ENCODE measurements at regions of chr2 and their contacts with region 1.

Region 1: DNA sequence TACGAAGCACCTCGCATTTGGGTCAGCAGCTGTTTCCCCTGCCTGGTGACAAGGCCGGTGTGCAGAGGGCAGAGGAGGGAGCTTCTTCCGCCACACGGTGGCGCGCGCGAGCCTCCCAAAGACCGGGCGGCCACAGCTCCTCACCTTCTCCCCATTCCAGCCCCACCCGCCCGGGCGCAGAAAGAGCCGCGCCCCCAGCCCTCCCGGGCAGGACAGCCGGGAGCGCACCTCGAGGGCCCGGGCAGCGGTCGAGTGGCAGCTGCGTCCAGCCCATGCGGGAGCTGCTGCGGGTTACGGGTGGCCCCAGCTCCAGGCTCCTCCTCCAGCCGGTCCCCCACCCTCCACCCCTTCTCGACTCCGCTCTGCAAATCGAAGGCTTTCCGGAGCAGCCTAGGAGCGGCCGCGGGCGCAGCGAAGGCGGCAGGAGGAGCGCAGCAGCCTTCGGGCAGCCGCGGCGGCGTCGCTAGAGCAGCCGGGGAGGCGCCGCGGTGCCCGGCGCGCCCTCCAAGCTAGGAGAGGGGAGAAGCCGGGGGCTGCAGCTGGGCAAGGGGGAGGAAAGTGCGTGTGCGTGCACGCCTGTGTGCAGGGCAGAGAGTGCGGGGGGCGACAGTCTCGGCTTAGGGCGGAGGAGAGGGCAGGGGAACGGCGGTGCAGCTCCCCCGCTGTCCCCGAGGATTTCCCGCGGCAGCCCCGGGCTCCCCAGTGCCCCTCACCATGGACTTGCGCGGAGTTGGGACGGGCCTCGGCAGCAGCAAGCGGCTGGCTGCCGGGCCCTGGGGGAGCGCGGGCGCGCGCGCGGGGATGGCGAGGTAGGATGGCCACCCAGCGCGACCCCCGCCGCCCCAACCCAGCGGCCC is at the start of gene CCDC85A:
- DNase-seq: peak; percentile 79 to 90 (median 84)
- H3K4me3 ChIP-seq: peak within 1 kb of the TSS; percentile 56 to 89 (median 75)
- H3K27ac ChIP-seq: peak within 1 kb of the TSS in 52 of 59 donors; percentile 19 to 87 (median 72)
- H3K27me3 ChIP-seq: peaks cover 0 to 4% (median 0%) of the 10 kb centered on the region in 45 donors
- CTCF ChIP-seq: peak; percentile 49 to 98 (median 94)
- total RNA-seq, gene CCDC85A: 14.7 to 52.9 (median 33.1) TPM

Region 2: GRCh38 chr2:55929476-55929875 is 254.4 kb before region 1 on chr2:
- intact Hi-C with region 1: no loop called
- DNase-seq: no peak
- H3K4me3 ChIP-seq: no peak overlapping the region
- H3K27ac ChIP-seq: no peak overlapping the region
- H3K27me3 ChIP-seq: peaks cover 0 to 17% (median 0%) of the 10 kb centered on the region in 45 donors
- CTCF ChIP-seq: no peak

Region 3: DNA sequence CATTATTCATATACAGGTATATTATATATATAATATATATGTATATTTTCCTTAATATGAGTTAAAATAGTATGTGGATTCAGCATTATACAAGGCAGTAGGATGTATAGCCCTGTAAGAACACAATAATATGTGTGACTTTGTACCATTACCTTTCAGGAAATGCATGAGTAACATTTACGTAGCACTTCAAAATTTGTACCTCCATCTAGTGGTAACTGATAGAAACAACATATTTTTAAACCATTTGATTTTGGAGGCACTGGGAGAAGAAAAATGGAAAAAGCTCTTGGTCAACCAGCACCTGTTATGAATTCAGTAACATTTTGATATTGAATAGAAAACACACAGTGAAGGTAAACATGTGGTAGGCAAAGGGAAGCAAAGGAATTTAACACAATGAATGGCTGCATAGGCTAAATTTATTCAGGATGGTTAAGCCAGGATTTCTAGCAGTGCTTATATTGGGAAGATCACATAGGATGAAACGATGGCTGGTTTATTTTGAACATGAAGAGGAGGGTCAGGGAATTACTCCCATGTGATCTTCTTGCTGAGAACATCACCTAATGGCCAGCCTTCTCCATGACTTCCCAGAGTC is 565.4 kb after region 1 on chr2:
- intact Hi-C with region 1: loop called (anchors 2 kb)
- DNase-seq: no peak
- H3K4me3 ChIP-seq: no peak overlapping the region
- H3K27ac ChIP-seq: no peak overlapping the region
- H3K27me3 ChIP-seq: no peaks in the 10 kb centered on the region
- CTCF ChIP-seq: peak; percentile 39 to 74 (median 61)

Region 4: DNA sequence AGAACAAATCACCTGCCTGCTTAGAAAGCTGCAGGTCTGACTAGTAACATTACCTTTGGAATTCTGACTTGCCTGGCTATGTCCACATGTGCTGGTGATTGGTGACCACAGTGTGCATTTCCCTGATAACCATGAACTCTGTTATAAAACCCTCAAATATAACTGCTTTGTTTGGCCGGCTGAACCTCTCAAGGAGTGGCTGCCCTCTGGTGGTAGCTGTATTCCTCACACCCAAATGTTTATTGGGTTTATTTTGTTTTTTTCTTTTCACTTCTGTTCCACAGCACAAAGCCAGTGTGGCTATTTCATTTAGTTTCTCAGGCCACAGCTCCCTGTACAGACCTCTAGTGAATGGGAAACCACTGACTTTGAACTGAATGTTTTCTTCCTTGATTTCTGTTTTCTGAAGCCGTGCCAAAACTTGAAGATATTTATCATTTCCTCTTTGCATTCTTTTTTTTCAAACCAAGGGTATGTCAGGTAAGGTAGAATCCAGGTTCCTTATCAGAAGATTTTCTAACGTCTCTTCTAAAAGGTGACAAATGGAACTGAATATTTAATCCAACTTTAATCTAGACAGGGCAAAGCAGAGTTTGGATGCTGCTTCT is 1313.7 kb after region 1 on chr2:
- intact Hi-C with region 1: loop called in 1 of 2 experiments (anchors 5 kb)
- DNase-seq: peak in 7 of 10 donors; percentile 12 to 50 (median 43)
- H3K4me3 ChIP-seq: no peak overlapping the region
- H3K27ac ChIP-seq: no peak overlapping the region
- H3K27me3 ChIP-seq: no peaks in the 10 kb centered on the region
- CTCF ChIP-seq: peak; percentile 65 to 90 (median 80)

Region 5: GRCh38 chr2:57516698-57517340 is 1332.9 kb after region 1 on chr2:
- intact Hi-C with region 1: loop called (anchors 2 to 5 kb)
- DNase-seq: no peak
- H3K4me3 ChIP-seq: peak overlapping the region in 40 of 59 donors; percentile 1 to 52 (median 24)
- H3K27ac ChIP-seq: peak overlapping the region in 4 of 59 donors; percentile 22 to 48 (median 33)
- H3K27me3 ChIP-seq: no peaks in the 10 kb centered on the region
- CTCF ChIP-seq: peak; percentile 60 to 97 (median 81)